ENCODE measurements at regions of chr5 and their contacts with region 1.

Region 1: DNA sequence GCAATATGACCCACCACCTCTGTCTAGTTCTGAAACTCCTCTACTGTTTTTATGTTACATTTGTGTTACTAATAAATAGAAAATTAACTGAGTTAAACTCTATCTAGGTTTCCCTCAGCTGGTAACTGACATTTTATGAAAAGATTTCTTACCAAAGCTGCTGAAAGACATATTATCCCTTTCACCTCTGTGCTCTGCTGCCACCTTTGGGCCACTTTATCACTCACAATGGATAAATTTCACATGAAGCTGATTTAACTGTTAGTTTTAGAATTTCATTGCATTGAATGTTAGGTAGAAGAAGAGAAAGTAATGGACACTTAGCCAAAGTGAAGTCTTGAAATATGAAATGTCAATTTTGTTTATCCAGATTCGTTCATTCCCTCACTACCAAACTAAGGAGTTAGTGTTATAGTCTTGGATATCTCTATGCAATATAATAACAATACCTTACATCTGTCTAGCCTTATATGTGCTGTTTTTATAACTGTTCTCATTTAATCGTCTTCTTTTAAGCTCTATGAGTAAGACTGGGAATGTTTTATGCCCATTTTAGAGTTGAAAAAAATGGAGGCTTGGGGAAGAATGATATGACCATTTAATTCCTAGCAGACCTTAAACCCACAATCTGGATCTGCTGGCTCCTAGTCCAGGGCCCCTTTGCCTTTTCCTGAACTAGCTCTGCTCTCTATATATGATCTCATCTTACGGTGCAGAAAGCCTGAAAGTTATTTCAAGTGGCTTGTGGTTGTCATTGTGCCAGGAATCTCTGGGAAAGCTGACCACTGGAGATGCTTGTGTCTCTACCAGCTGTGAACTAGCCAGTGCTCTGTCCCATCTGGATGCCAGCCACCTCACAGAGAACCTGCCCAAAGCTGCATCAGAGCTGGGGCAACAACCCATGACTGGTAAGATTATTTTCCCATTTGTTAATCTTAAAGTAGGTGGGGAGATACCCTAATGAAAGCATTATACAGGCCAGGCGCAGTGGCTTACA is 97.1 kb downstream of the GOLPH3 start:
- DNase-seq: peak; percentile 68
- ATAC-seq: peak; percentile 87

Region 2: GRCh38 chr5:31581498-31582099 is 495.4 kb before region 1 on chr5:
- intact Hi-C with region 1: loop called (anchors 10 kb)
- DNase-seq: no peak
- ATAC-seq: peak; percentile 41

Region 3: GRCh38 chr5:31825518-31826068 is 251.4 kb before region 1 on chr5:
- intact Hi-C with region 1: loop called (anchors 5 kb)
- DNase-seq: no peak
- ATAC-seq: peak; percentile 85

Measured in left ventricle myocardium superior (tissue), 1 donor.